Activated CD4-positive, alpha-beta T cell treated with anti-CD3 and anti-CD28 coated beads for 36 hours (primary cell): ENCODE measurements at regions of chr1 and their contacts with region 1.

Region 1: DNA sequence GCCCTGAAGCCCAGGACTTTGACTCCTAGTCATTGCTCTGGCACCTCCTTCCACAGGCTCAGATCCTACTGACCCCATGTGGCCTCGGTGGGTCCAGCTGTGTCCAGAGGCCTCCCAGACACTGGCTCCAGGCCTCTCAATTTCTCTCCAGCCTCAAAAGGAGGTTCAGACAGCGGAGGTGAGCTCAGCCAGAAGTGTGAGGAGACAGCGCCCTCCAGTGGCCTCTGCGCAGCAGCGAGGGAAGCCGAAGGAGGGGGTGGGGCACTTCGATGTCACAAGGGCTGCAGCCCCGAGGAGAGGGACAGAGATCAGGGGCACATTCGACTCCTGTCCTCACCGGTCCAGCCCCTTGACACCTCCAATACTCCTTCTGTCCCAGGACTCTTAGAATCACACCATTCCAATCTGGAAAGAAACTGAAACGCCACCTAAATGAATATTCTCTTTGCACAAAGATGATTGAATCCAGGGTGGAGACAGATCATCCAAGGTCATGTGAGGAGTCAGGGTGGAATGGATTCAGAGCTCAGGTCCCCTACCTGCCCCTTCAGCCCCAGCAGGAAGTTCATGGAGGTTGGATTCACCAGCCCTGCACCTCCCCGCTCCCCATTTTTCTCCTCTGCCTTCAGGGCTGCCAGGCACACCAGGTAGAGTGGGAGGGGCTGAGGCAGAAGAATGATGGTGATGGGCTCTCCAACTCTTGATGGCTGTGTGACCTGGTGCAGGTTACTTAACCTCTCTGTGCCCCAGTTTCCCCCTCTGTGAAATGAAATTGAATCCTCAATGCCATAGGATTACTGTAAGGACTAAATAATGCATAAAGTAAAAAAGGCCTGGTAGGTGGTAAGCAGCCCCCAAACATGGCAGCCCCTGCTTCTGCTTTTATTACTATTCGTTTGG is 34.8 kb upstream of the ZBTB40 start:
- DNase-seq: peak; percentile 91
- ATAC-seq: peak; percentile 84
- H3K4me3 Mint-ChIP-seq: no peak overlapping the region
- H3K27ac Mint-ChIP-seq: no peak overlapping the region
- H3K4me1 Mint-ChIP-seq: peaks cover 3% of the 10 kb centered on the region
- H3K27me3 Mint-ChIP-seq: peaks cover 32% of the 10 kb centered on the region

Region 2: DNA sequence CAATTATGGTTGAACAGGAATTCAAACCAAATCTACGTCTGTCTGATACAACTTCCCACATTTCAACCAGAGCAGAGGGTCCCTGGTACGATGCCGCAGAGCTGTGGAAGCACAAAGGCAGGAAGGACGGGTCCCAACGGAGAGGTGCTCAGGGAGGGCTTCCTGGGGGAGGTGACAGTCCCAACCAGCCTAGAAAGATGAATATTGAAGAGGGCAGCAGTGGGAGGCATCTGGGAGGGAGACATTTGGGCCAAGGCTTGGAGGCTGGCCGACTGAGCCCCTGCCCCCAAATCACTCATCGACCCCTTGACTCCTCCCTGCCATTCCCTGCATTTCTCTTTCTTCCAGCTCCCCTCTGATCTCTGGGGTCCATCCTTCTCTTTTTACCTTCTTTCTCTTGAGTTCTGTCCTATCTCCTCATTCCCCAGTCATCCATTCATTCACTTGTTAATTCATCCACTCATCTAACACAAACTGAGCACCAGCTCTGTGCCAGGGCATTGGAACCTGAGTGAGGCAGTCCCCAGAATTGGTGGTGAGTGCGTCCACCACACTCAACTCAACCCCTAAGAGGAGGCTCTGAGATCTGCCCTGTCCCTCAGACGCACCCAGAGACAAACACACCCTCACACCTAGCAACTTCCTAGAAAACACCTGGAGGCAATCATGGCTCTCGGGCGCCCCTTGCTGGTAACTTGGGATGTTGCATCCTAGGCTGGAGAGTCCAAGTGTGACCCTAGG is 453.2 kb before region 1 on chr1:
- CTCF ChIA-PET with region 1: no interaction called
- POLR2A ChIA-PET with region 1: no interaction called
- intact Hi-C with region 1: loop called in 1 of 2 experiments (anchors 5 kb)
- DNase-seq: peak; percentile 91
- ATAC-seq: peak; percentile 98
- H3K4me3 Mint-ChIP-seq: no peak overlapping the region
- H3K27ac Mint-ChIP-seq: peak overlapping the region; percentile 73
- H3K4me1 Mint-ChIP-seq: peaks cover 8% of the 10 kb centered on the region
- H3K27me3 Mint-ChIP-seq: no peaks in the 10 kb centered on the region

Region 3: DNA sequence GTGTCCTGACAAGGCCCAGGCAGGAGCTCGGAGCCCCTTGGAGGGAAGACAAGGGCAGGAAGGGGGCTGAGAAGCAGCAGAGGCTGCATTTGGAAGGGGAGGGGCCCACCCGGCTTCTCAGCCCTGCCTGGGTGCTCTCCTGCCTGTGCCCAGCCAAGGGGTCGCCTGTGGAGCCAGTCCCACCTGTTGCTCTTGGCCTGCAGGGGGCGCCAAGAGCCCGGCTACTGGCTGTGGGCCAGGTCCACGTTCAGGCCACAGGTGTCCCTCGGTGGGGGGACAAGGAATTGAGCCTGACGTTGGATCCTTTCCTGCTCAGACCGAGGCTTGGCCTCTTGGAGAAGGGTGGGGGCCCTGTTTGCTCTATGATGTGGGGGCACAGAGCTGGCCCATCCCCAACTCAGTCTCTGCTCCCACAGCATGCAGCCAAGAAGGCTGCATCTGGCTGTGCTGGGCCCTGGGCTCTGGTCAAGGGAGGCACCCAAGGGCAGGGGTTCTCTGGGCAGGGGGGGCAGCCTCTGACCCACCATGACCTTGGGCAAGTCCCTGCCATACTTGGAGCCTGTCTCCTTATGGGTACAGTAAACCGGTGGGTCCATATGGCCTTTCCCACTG is 284.8 kb before region 1 on chr1:
- CTCF ChIA-PET with region 1: interaction called, 15 read pairs
- POLR2A ChIA-PET with region 1: no interaction called
- intact Hi-C with region 1: loop called (anchors 1 kb)
- DNase-seq: peak; percentile 81
- ATAC-seq: peak; percentile 83
- H3K4me3 Mint-ChIP-seq: no peak overlapping the region
- H3K27ac Mint-ChIP-seq: no peak overlapping the region
- H3K4me1 Mint-ChIP-seq: no peaks in the 10 kb centered on the region
- H3K27me3 Mint-ChIP-seq: no peaks in the 10 kb centered on the region

Region 4: GRCh38 chr1:22216210-22216883 is 200.5 kb before region 1 on chr1:
- CTCF ChIA-PET with region 1: no interaction called
- POLR2A ChIA-PET with region 1: no interaction called
- intact Hi-C with region 1: loop called in 1 of 2 experiments (anchors 10 kb)
- DNase-seq: no peak
- ATAC-seq: no peak
- H3K4me3 Mint-ChIP-seq: no peak overlapping the region
- H3K27ac Mint-ChIP-seq: no peak overlapping the region
- H3K4me1 Mint-ChIP-seq: no peaks in the 10 kb centered on the region
- H3K27me3 Mint-ChIP-seq: peaks cover 17% of the 10 kb centered on the region

Region 5: DNA sequence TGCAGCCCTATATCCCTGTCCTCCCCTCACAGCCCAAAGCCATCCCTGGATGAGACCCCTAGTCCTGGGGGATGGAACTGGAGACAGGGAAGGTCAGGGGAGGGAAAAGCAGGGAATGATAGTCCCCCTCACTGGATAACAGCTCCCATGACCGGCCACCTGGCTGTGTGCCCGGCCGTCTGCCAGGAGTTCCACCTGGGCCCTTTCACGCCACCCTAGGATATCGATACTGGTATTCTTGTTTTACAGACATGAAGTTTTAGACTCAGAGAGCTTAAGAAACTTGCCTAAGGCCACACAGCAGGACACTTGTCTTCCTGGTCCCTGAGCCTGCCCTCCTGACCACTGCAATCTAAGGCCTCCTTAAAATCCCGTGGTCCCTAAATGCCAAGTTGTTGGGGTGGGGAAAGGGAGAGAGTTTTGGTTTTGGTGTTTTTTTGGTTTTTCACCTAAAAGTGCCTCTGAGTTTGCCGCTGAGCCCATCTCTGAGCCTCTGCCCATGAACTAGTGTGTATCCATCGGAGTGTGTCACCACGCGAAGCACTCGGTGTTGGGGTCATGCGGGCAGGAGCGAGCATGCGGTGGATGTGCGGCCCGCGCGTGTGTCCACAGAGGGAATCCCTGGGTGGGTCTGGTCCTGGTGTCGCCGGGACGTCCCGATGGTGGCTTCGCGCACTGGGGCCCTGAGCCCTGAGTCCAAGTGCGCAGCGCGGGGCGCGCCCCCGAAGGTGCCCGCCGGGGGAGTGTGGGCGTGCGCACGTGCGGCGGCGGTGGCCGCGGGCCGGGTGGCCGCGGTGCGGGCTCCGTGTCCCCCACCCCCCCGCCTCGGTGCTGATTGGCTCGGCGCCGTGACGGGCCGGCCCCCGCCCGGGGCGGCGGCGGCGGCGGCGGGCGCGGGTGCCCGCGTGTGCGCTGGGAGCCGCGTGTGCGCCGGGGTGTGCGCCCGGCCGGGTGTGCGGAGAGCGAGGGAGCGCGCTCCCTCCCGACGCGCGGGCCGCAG is 146.1 kb after region 1 on chr1 and contains the start of gene EPHA8:
- CTCF ChIA-PET with region 1: no interaction called
- POLR2A ChIA-PET with region 1: no interaction called
- intact Hi-C with region 1: no loop called
- DNase-seq: no peak
- ATAC-seq: no peak
- H3K4me3 Mint-ChIP-seq: no peak within 1 kb of the TSS
- H3K27ac Mint-ChIP-seq: no peak within 1 kb of the TSS
- H3K4me1 Mint-ChIP-seq: peaks cover 3% of the 10 kb centered on the region
- H3K27me3 Mint-ChIP-seq: peaks cover 47% of the 10 kb centered on the region
- total RNA-seq, gene EPHA8: not detected

Region 6: DNA sequence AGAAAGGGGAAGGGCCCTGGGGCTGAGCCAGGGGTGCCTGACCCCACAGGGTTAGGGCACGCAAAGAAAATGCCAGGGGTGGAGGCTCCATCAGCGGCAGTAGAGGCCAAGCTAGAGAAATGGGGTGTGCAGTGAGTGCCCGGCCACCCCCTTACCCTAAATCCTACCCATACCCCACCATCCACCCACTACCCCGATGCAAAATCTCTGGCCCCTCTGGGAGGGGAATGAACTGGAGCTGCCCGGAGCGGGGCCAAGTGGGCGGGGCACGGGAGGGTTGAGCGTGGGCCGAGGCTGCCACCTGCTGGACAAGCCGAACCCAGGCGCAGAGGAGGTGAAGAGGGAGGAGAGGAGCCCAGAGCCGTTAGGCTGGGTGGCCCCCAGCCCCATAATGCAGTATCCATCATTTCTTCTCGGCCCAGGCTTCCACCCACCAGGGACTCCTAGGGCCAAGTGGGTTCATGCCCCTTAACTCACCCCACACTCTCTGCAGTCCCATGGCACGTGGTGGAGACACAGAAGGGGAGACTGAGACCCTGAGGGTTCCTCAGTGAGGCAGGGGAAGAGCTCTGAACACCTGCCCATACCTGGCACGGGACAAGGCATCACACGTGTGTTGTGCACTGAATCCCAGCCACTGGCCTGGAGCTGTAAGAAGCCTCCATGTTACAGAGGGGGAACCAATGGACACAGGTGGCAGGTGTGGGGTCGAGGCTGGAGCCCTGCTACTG is 225.3 kb after region 1 on chr1:
- CTCF ChIA-PET with region 1: interaction called, 9 read pairs
- POLR2A ChIA-PET with region 1: no interaction called
- intact Hi-C with region 1: loop called (anchors 1 kb)
- DNase-seq: peak; percentile 85
- ATAC-seq: peak; percentile 86
- H3K4me3 Mint-ChIP-seq: no peak overlapping the region
- H3K27ac Mint-ChIP-seq: no peak overlapping the region
- H3K4me1 Mint-ChIP-seq: no peaks in the 10 kb centered on the region
- H3K27me3 Mint-ChIP-seq: peaks cover 9% of the 10 kb centered on the region

Region 7: GRCh38 chr1:22739648-22740385 is 323.0 kb after region 1 on chr1:
- CTCF ChIA-PET with region 1: no interaction called
- POLR2A ChIA-PET with region 1: no interaction called
- intact Hi-C with region 1: no loop called
- DNase-seq: no peak
- ATAC-seq: no peak
- H3K4me3 Mint-ChIP-seq: no peak overlapping the region
- H3K27ac Mint-ChIP-seq: no peak overlapping the region
- H3K4me1 Mint-ChIP-seq: no peaks in the 10 kb centered on the region
- H3K27me3 Mint-ChIP-seq: peaks cover 6% of the 10 kb centered on the region